ENCODE measurements at regions of chr22 and their contacts with region 1.

Region 1: GRCh38 chr22:42920101-42920820 is 63.2 kb upstream of the ARFGAP3 start:
- DNase-seq: peak in 1 of 5 donors; percentile 21
- H3K4me3 ChIP-seq: no peak overlapping the region
- H3K27ac ChIP-seq: no peak overlapping the region
- H3K4me1 ChIP-seq: peaks cover 6% of the 10 kb centered on the region
- H3K27me3 ChIP-seq: no peaks in the 10 kb centered on the region
- CTCF ChIP-seq: no peak
- EP300 ChIP-seq: no peak
- POLR2A ChIP-seq: no peak

Region 2: GRCh38 chr22:42994881-42995562 is 74.8 kb after region 1 on chr22:
- intact Hi-C with region 1: loop called in 1 of 4 experiments (anchors 10 kb)
- DNase-seq: peak in 1 of 5 donors; percentile 61
- H3K4me3 ChIP-seq: no peak overlapping the region
- H3K27ac ChIP-seq: peak overlapping the region; percentile 7 to 40
- H3K4me1 ChIP-seq: peaks cover 29% of the 10 kb centered on the region
- H3K27me3 ChIP-seq: no peaks in the 10 kb centered on the region
- CTCF ChIP-seq: no peak
- EP300 ChIP-seq: no peak
- POLR2A ChIP-seq: no peak

Measured in ovary (tissue), 10 donors.